Endothelial cell of umbilical vein (primary cell): ENCODE measurements at regions of chr6 and their contacts with region 1.

Region 1: DNA sequence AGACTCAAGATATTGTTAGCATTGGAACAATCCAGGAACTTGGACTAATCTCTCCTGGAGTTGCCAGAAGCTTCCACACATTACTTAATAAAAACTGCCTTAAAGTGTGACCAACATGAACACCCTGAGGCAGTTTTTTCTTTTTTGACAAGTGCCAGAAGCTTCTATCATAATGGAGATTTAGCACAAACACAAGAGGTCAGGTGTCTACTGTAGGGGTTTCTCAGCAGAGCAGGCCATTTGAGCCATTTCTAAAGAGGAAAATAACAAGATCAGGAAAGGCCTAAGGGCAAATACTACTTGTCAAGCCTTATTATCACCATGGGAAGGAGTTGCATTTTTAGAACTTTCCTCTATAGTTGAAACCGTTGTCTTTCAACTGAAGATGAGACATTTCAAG is 361.5 kb downstream of the EPM2A start:
- DNase-seq: no peak
- H3K4me3 ChIP-seq: no peak overlapping the region
- H3K27ac ChIP-seq: no peak overlapping the region
- H3K4me1 ChIP-seq: no peaks in the 10 kb centered on the region
- H3K27me3 ChIP-seq: no peaks in the 10 kb centered on the region
- CTCF ChIP-seq: no peak
- POLR2A ChIP-seq: no peak

Region 2: DNA sequence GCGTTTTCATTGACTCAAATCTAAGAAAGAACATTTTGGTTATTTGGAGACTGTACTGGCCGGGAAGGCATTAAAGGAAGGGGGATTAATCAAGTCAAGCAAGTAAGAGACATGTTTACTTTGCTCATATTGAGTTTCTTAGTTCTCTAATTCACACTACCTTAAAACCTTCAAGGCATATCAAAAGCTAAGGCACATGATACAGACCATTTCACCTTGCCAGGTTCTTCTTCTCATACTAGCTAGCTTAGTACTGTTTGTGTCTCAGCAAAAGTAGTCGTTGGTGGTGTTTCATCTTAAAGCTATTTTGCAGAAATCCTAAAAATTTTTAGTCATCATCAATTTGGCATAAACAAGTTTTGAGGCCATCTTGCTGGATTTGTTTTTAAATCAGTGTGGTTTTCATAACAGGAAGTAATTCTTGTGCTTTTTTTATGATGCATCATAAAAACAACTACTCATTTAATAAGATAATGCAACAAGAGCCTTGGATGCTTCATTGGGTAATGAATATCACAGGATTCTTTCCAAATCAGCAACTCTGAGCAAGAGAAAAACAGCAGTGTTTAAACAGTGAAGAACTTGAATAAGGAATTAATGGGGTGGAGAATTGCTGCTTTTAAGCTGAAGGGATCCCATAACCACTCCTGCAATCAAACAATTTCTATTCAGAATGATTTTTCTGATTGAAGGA is 63.9 kb before region 1 on chr6:
- CTCF ChIA-PET with region 1: no interaction called
- POLR2A ChIA-PET with region 1: no interaction called
- dilution Hi-C with region 1: no loop called
- intact Hi-C with region 1: loop called (anchors 2 kb)
- DNase-seq: no peak
- H3K4me3 ChIP-seq: no peak overlapping the region
- H3K27ac ChIP-seq: no peak overlapping the region
- H3K4me1 ChIP-seq: no peaks in the 10 kb centered on the region
- H3K27me3 ChIP-seq: no peaks in the 10 kb centered on the region
- CTCF ChIP-seq: no peak
- POLR2A ChIP-seq: no peak

Region 3: DNA sequence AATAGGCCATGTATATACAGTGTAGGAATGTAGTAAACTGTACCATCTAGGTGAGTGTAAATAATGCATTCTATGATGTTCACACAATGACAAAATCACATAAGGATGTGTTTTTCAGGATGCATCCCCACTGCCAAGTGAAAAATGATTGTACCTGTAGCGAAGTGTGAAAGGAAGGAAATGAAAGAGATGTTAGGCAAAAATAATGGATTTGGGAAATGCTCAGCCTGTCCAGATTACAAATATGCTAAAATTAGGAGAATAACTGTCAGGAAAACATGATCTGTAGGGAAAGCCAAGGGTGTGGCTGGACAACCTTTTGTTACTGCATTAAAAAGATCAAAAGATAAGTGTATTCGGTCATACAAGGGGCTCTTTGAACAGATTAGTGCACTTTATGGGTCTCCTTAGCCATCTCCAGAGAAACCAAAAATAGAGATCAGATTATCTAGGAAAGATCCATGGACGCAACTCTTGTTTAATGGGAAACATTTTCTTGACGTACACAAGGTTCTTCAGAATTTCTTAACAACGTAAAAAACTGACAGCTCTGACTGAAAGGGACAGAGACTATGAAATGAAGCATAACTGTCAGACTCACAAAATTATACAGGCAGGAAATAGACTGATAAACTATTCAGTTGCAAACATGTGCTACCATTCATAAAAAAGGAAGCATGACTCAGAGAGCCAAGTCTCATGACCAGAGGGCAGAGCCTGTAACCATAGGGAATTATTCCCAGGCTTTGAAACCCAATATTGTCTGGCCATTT is 916.2 kb after region 1 on chr6:
- CTCF ChIA-PET with region 1: no interaction called
- POLR2A ChIA-PET with region 1: no interaction called
- dilution Hi-C with region 1: no loop called
- intact Hi-C with region 1: no loop called
- DNase-seq: peak; percentile 79
- H3K4me3 ChIP-seq: no peak overlapping the region
- H3K27ac ChIP-seq: peak overlapping the region; percentile 64
- H3K4me1 ChIP-seq: peaks cover 15% of the 10 kb centered on the region
- H3K27me3 ChIP-seq: no peaks in the 10 kb centered on the region
- CTCF ChIP-seq: no peak
- POLR2A ChIP-seq: no peak